ENCODE measurements at regions of chr10 and their contacts with region 1.

Region 1: GRCh38 chr10:6062101-6062771 is at the start of gene IL2RA:
- DNase-seq: peak in 8 of 10 donors; percentile 45 to 77 (median 58)
- ATAC-seq: peak; percentile 95
- H3K4me3 Mint-ChIP-seq: peak within 1 kb of the TSS; percentile 60 to 86 (median 80)
- H3K27ac Mint-ChIP-seq: peak within 1 kb of the TSS; percentile 17 to 88 (median 67)
- H3K4me1 Mint-ChIP-seq: peaks cover 18 to 70% (median 39%) of the 10 kb centered on the region in 4 donors
- H3K27me3 Mint-ChIP-seq: no peaks in the 10 kb centered on the region
- polyA plus RNA-seq, gene IL2RA: 0.07 to 0.25 (median 0.16) TPM

Region 2: GRCh38 chr10:6036861-6037321 is 25.3 kb before region 1 on chr10:
- POLR2A ChIA-PET with region 1: interaction called, 10 read pairs
- DNase-seq: no peak
- ATAC-seq: peak; percentile 50 to 67
- H3K4me3 Mint-ChIP-seq: peak overlapping the region in 4 of 10 donors; percentile 28 to 50 (median 36)
- H3K27ac Mint-ChIP-seq: peak overlapping the region in 8 of 10 donors; percentile 37 to 92 (median 80)
- H3K4me1 Mint-ChIP-seq: peaks cover 17 to 37% (median 35%) of the 10 kb centered on the region in 4 donors
- H3K27me3 Mint-ChIP-seq: no peaks in the 10 kb centered on the region